ENCODE measurements at regions of chr1 and their contacts with region 1.

Region 1: GRCh38 chr1:156445789-156446263 is 54.7 kb downstream of the MEF2D start:
- DNase-seq: peak; percentile 92
- ATAC-seq: peak; percentile 93
- H3K4me3 Mint-ChIP-seq: no peak overlapping the region
- H3K27ac Mint-ChIP-seq: no peak overlapping the region
- H3K4me1 Mint-ChIP-seq: peaks cover 10% of the 10 kb centered on the region
- H3K27me3 Mint-ChIP-seq: peaks cover 43% of the 10 kb centered on the region
- CTCF ChIP-seq: peak; percentile 92

Region 2: GRCh38 chr1:156045076-156045475 is 400.8 kb before region 1 on chr1:
- CTCF ChIA-PET with region 1: no interaction called
- POLR2A ChIA-PET with region 1: no interaction called
- DNase-seq: no peak
- ATAC-seq: no peak
- H3K4me3 Mint-ChIP-seq: no peak overlapping the region
- H3K27ac Mint-ChIP-seq: no peak overlapping the region
- H3K4me1 Mint-ChIP-seq: no peaks in the 10 kb centered on the region
- H3K27me3 Mint-ChIP-seq: no peaks in the 10 kb centered on the region
- CTCF ChIP-seq: no peak

Region 3: DNA sequence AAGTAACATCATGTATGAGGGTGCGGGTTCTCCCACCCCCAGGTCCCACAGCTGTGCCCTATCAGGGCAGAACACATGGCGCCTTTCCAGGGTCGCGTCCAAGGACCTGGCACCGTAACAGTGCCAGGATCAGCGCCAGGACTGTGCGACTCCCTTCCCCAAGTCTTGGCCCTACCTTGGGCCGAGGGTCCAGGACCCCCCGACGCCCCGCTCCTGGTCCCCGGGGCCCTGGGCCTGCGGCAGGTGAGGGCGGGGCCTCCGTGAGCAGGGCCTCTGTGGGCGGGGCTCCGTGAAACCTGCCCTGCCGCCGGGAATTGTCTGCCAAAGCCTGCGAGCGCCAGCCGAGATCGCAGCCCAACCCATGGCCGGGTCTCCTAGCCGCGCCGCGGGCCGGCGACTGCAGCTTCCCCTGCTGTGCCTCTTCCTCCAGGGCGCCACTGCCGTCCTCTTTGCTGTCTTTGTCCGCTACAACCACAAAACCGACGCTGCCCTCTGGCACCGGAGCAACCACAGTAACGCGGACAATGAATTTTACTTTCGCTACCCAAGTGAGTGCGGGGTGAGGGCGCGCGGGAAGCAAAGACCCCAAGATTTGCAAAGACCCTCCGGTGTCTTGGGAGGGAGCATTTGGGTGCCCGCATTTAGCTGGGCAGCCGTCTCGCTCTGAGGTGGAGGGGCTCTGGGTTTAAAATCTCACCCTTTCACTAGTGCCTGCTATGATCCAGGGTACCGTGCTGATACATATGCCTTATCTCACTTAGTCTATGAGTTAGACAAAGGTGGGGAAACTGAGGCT is 76.7 kb before region 1 on chr1 and contains the start of gene RHBG:
- CTCF ChIA-PET with region 1: interaction called, 47 read pairs
- POLR2A ChIA-PET with region 1: no interaction called
- DNase-seq: peak; percentile 86
- ATAC-seq: peak; percentile 90
- H3K4me3 Mint-ChIP-seq: peak within 1 kb of the TSS; percentile 84
- H3K27ac Mint-ChIP-seq: no peak within 1 kb of the TSS
- H3K4me1 Mint-ChIP-seq: peaks cover 21% of the 10 kb centered on the region
- H3K27me3 Mint-ChIP-seq: peaks cover 35% of the 10 kb centered on the region
- CTCF ChIP-seq: no peak
- total RNA-seq, gene RHBG: 1.7 to 2.3 TPM (median 1.9 TPM) in 3 replicates

Region 4: GRCh38 chr1:156401681-156402081 is 44.1 kb before region 1 on chr1:
- CTCF ChIA-PET with region 1: interaction called, 25 read pairs
- POLR2A ChIA-PET with region 1: no interaction called
- DNase-seq: peak; percentile 67
- ATAC-seq: peak; percentile 96
- H3K4me3 Mint-ChIP-seq: no peak overlapping the region
- H3K27ac Mint-ChIP-seq: peak overlapping the region; percentile 89
- H3K4me1 Mint-ChIP-seq: peaks cover 34% of the 10 kb centered on the region
- H3K27me3 Mint-ChIP-seq: peaks cover 16% of the 10 kb centered on the region
- CTCF ChIP-seq: no peak

Region 5: GRCh38 chr1:156429313-156430060 is 16.3 kb before region 1 on chr1:
- CTCF ChIA-PET with region 1: interaction called, 43 read pairs
- POLR2A ChIA-PET with region 1: interaction called, 3 read pairs
- DNase-seq: no peak
- ATAC-seq: peak; percentile 11
- H3K4me3 Mint-ChIP-seq: peak overlapping the region; percentile 58
- H3K27ac Mint-ChIP-seq: no peak overlapping the region
- H3K4me1 Mint-ChIP-seq: peaks cover 46% of the 10 kb centered on the region
- H3K27me3 Mint-ChIP-seq: peaks cover 100% of the 10 kb centered on the region
- CTCF ChIP-seq: no peak

Region 6: GRCh38 chr1:156456622-156457465 is 11.0 kb after region 1 on chr1:
- CTCF ChIA-PET with region 1: interaction called, 41 read pairs
- POLR2A ChIA-PET with region 1: interaction called, 3 read pairs
- DNase-seq: peak; percentile 97
- ATAC-seq: peak; percentile 84
- H3K4me3 Mint-ChIP-seq: peak overlapping the region; percentile 89
- H3K27ac Mint-ChIP-seq: peak overlapping the region; percentile 99
- H3K4me1 Mint-ChIP-seq: peaks cover 15% of the 10 kb centered on the region
- H3K27me3 Mint-ChIP-seq: no peaks in the 10 kb centered on the region
- CTCF ChIP-seq: no peak

Region 7: GRCh38 chr1:156500797-156501499 is 55.1 kb after region 1 on chr1:
- CTCF ChIA-PET with region 1: interaction called, 15 read pairs
- POLR2A ChIA-PET with region 1: no interaction called
- DNase-seq: peak; percentile 89
- ATAC-seq: peak; percentile 65
- H3K4me3 Mint-ChIP-seq: peak overlapping the region; percentile 83
- H3K27ac Mint-ChIP-seq: peak overlapping the region; percentile 36; the same call in 1 of the 2 replicates
- H3K4me1 Mint-ChIP-seq: peaks cover 70% of the 10 kb centered on the region
- H3K27me3 Mint-ChIP-seq: peaks cover 13% of the 10 kb centered on the region
- CTCF ChIP-seq: no peak

Region 8: DNA sequence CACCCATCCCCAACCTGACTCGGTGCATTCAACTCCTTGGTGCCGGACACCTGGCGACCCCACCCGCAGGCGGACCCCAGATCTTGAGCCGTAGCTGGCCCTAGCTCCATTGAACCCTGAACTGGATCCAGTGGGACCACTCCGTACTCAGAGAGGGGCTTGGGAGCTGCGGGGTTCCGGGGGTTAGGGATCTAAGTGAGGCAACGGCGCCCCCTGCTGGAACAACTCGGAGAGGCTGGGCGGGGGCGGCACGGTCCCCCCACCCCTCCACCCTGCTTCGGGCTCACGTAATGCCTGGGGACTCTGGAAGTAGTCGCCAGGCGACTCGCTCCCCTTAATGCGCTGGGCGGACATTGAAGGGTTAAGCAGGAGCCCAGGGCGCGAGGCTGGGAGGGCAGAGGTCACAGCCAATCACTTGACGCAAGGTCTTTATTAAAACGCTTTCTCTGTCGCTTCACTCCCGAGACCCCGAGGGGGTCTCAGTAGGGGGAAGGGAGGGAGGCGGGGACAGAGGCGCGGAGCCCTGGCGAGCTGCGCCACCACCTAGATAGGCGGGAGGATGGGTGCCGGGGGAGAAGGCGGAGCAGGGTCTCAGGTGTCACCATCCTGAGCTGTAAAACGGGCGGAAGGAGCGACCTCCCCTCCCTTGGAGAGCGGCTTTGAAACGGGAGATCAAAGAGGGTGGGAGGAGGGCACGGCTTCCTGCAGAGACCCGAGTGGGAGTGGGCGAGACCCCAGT is 260.3 kb after region 1 on chr1:
- CTCF ChIA-PET with region 1: no interaction called
- POLR2A ChIA-PET with region 1: no interaction called
- DNase-seq: peak; percentile 94
- ATAC-seq: peak; percentile 45
- H3K4me3 Mint-ChIP-seq: peak overlapping the region; percentile 84
- H3K27ac Mint-ChIP-seq: peak overlapping the region; percentile 96
- H3K4me1 Mint-ChIP-seq: peaks cover 62% of the 10 kb centered on the region
- H3K27me3 Mint-ChIP-seq: peaks cover 23% of the 10 kb centered on the region
- CTCF ChIP-seq: peak; percentile 96

Measured in WTC11 (cell line).